Adrenal gland (tissue), 19 donors: ENCODE measurements at regions of chr2 and their contacts with region 1.

Region 1: GRCh38 chr2:36355151-36355889 is at the start of gene CRIM1:
- DNase-seq: peak; percentile 88 to 94 (median 91)
- H3K4me3 ChIP-seq: peak within 1 kb of the TSS; percentile 25 to 83 (median 56)
- H3K27ac ChIP-seq: peak within 1 kb of the TSS; percentile 25 to 94 (median 80)
- H3K4me1 ChIP-seq: peaks cover 3 to 23% of the 10 kb centered on the region in 2 donors
- H3K27me3 ChIP-seq: no peaks in the 10 kb centered on the region
- CTCF ChIP-seq: no peak
- POLR2A ChIP-seq: peak; percentile 81 to 97
- total RNA-seq, gene CRIM1: 12.5 to 66.3 (median 41.4) TPM

Region 2: DNA sequence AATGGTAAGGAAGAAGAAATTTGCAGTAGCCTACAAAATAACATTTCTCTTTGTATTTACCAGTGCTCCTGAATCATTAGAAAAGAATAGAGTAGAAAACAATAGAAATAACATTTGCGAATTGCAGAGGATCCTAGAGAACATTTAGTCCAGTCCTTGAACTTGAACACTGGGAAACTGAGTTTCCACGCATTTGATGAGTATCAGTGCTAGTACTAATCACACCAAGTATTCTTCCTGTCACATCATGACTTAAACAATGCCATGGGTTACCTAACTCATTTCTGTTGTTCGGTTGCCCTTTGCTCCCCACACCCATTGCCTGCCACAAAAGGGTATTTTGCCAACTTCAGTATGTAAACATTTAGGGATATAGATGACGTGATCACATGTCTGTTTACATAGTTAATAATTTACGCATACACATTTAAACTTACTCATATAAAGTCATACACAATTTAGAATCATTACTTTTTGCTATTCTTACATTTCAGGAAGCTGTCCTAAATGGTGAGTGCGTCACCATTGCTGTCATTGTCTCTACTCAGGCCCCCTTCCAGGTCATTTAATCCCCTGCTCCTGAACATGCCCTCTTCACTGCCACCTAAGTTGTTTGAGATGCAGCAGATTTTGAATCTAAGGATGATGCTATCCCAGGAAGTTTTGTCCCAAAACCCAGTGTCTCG is 42.6 kb after region 1 on chr2:
- intact Hi-C with region 1: no loop called
- DNase-seq: no peak
- H3K4me3 ChIP-seq: no peak overlapping the region
- H3K27ac ChIP-seq: no peak overlapping the region
- H3K4me1 ChIP-seq: no peaks in the 10 kb centered on the region
- H3K27me3 ChIP-seq: no peaks in the 10 kb centered on the region
- CTCF ChIP-seq: no peak
- POLR2A ChIP-seq: no peak

Region 3: GRCh38 chr2:36461039-36461681 is 105.8 kb after region 1 on chr2:
- intact Hi-C with region 1: loop called (anchors 10 kb)
- DNase-seq: no peak
- H3K4me3 ChIP-seq: no peak overlapping the region
- H3K27ac ChIP-seq: peak overlapping the region in 3 of 5 donors; percentile 28 to 70 (median 48)
- H3K4me1 ChIP-seq: peaks cover 14 to 23% of the 10 kb centered on the region in 2 donors
- H3K27me3 ChIP-seq: no peaks in the 10 kb centered on the region
- CTCF ChIP-seq: no peak
- POLR2A ChIP-seq: no peak

Region 4: GRCh38 chr2:36507408-36507812 is 152.1 kb after region 1 on chr2:
- intact Hi-C with region 1: loop called in 1 of 2 experiments (anchors 5 kb)
- DNase-seq: peak in 6 of 7 donors; percentile 36 to 69 (median 54)
- H3K4me3 ChIP-seq: no peak overlapping the region
- H3K27ac ChIP-seq: no peak overlapping the region
- H3K4me1 ChIP-seq: no peaks in the 10 kb centered on the region
- H3K27me3 ChIP-seq: no peaks in the 10 kb centered on the region
- CTCF ChIP-seq: peak; percentile 38 to 66 (median 62)
- POLR2A ChIP-seq: no peak

Region 5: GRCh38 chr2:36663851-36664695 is 308.8 kb after region 1 on chr2:
- intact Hi-C with region 1: loop called (anchors 5 kb)
- DNase-seq: peak; percentile 24 to 54 (median 32)
- H3K4me3 ChIP-seq: no peak overlapping the region
- H3K27ac ChIP-seq: no peak overlapping the region
- H3K4me1 ChIP-seq: peaks cover 0 to 7% of the 10 kb centered on the region in 2 donors
- H3K27me3 ChIP-seq: no peaks in the 10 kb centered on the region
- CTCF ChIP-seq: peak; percentile 72 to 85 (median 82)
- POLR2A ChIP-seq: no peak

Region 6: DNA sequence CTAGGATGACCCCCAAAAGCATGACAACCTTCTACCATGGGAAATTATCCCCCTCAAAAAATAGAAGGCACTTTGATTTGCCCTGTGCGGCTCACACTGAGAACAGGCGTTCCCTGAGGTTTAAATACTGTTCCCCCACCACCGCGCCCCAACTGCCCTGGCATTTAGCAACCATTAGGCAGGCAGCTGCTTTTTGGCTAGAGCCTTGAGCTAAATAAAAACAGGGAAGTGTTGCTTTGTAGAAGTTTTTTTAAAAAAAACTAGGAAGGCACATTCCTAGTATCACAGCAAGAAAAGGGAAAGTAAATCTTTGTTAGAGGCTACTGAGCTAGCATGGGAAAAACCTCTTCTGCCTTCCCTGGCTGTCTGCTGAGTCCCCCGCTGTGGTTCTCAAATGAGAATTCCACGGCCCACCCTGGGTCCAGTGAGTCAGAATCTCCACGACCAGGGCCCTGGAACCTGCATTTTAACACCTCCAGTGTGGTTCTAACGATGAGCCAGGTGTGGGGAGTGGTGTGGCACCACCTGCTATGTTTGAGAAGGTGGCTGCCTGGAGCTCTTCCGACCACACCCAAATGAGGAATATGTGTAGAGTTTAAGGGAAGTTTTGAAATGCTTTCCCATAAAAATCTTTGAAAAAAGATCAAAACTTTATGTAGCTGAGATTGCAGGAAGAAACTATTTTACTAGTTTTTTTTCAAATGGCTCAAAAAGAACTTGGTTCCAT is 407.6 kb after region 1 on chr2:
- intact Hi-C with region 1: no loop called
- DNase-seq: no peak
- H3K4me3 ChIP-seq: no peak overlapping the region
- H3K27ac ChIP-seq: no peak overlapping the region
- H3K4me1 ChIP-seq: no peaks in the 10 kb centered on the region
- H3K27me3 ChIP-seq: no peaks in the 10 kb centered on the region
- CTCF ChIP-seq: no peak
- POLR2A ChIP-seq: no peak